Activated T-helper 1 cell treated with anti-CD3 and anti-CD28 coated beads, Interleukin-12 subunit alpha, Interleukin-12 subunit beta, Interleukin-2, Interleukin-4 antibody, amounts not matched to agents 30 ng/mL and 10 ng/mL and 1 ng/mL, durations not matched to agents 14 hours and 24 hours and 36 hours (primary cell): ENCODE measurements at regions of chr2 and their contacts with region 1.

Region 1: DNA sequence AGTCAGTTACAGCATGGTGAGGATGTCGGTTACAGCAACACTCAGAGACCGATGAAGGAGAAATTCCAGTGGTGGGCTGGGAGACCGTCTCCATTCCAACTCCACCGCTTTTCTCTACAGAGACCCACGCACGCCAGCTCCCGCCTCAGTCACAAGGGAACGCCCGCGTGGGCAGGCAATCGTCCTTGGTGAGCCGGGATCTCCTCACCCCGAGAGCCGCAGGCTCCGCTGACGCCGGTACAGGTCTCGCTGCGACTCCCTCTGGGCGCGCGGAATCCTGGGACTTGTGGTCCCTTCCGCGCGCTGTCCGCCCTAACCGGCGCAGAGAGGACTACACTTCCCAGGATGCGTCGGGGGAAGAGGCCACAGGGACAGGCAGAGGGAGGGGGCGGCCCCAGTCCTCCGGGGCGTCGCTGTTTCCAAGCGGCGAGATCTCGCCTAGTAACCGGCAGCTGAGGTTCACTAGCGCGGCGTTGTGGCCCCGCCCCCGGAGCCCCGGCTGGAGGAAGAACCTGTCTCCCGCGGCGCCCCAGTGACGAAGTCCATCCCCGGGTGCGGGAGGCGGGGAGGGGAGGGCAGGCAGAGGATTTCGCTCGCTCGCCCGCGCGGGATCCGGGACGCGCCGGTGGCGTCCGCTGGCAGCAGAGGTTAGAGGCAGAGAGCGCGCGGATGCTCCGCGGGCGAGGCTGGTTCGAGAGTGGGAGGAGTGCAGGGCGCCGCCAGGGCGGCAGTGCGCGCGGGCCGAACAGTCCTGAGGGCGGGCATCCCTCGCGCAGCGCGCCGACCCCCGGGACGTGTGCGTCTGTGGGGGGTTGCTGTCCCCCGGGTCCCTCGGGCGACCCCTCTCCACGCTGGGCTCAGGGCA is at the start of gene EML6:
- DNase-seq: peak; percentile 99
- H3K4me3 Mint-ChIP-seq: peak within 1 kb of the TSS; percentile 87
- H3K27ac Mint-ChIP-seq: peak within 1 kb of the TSS; percentile 49
- H3K4me1 Mint-ChIP-seq: peaks cover 14% of the 10 kb centered on the region
- H3K27me3 Mint-ChIP-seq: peaks cover 71% of the 10 kb centered on the region
- total RNA-seq, gene EML6: 0.37 and 0.44 TPM in 2 replicates

Region 2: GRCh38 chr2:53970724-53971602 is 752.4 kb before region 1 on chr2 and contains the start of gene PSME4:
- intact Hi-C with region 1: loop called (anchors 2 kb)
- DNase-seq: peak; percentile 91
- H3K4me3 Mint-ChIP-seq: peak within 1 kb of the TSS; percentile 99
- H3K27ac Mint-ChIP-seq: peak within 1 kb of the TSS; percentile 99
- H3K4me1 Mint-ChIP-seq: peaks cover 39% of the 10 kb centered on the region
- H3K27me3 Mint-ChIP-seq: no peaks in the 10 kb centered on the region
- total RNA-seq, gene PSME4: 59.3 and 59.7 TPM in 2 replicates

Region 3: DNA sequence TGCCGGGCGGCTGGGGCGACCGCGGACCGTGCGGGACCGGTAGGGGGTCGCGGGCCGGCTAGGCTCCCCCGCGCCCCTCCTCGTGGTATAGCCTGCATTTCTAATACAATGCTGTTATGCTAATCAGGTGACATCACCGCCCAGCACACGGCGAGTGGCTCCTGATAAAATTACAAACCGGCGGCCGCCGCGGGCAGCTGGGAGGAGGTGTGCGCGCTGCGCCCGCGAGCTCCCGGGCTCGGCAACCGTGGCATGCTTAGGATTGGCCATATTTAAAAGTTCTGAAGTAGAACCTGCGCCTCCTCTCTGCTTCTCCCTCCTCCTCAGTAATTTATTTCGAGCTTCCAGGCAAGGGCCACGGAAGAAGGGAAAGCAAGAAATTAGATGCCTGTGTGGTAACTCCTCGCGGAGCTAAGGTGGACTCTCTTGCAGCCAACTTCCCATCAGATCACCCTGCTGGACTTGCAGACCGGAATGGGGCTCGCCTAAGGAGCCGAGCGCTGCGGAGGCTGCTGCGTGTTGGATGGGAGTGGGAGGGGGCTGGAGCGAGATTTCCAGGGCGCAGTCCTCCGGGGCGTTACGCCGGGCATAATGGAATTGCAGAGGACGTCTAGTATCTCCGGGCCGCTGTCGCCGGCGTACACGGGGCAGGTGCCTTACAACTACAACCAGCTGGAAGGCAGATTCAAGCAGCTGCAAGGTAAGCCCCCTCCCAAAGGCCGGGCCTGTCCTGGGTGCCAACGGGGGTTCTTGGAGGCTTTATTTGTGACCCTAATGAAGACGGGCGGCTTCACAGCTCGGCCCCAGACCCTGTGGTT is 165.0 kb before region 1 on chr2:
- intact Hi-C with region 1: loop called (anchors 1 kb)
- DNase-seq: peak; percentile 64
- H3K4me3 Mint-ChIP-seq: peak overlapping the region; percentile 90
- H3K27ac Mint-ChIP-seq: peak overlapping the region; percentile 88
- H3K4me1 Mint-ChIP-seq: peaks cover 89% of the 10 kb centered on the region
- H3K27me3 Mint-ChIP-seq: peaks cover 3% of the 10 kb centered on the region

Region 4: GRCh38 chr2:54704688-54705605 is 18.4 kb before region 1 on chr2:
- intact Hi-C with region 1: loop called (anchors 2 kb)
- DNase-seq: no peak
- H3K4me3 Mint-ChIP-seq: no peak overlapping the region
- H3K27ac Mint-ChIP-seq: no peak overlapping the region
- H3K4me1 Mint-ChIP-seq: peaks cover 8% of the 10 kb centered on the region
- H3K27me3 Mint-ChIP-seq: peaks cover 53% of the 10 kb centered on the region

Region 5: DNA sequence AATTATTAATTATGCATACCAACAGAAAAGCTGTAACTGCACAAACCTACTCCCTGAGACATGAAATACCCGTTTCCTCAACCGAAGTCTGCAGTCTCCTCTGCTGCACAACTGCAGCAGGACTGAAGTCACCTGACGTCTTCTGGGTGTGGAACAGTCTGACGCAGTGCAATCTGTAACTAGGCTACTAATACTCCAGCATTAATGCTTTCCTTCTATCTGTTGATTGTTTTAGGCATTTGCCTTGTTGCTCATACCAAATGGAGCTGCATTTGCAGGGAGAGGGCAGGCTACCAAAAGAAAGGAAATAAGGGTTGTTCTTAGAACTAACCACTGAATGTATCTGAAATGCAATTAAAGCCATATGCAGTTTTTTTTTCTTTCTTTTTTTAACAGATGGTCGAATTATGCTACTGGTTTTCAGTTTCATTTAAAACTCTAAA is 286.8 kb after region 1 on chr2:
- intact Hi-C with region 1: loop called (anchors 10 kb)
- DNase-seq: peak; percentile 20
- H3K4me3 Mint-ChIP-seq: peak overlapping the region; percentile 83
- H3K27ac Mint-ChIP-seq: peak overlapping the region; percentile 35
- H3K4me1 Mint-ChIP-seq: peaks cover 42% of the 10 kb centered on the region
- H3K27me3 Mint-ChIP-seq: no peaks in the 10 kb centered on the region

Region 6: GRCh38 chr2:55232084-55232862 is 508.9 kb after region 1 on chr2 and contains the starts of genes CLHC1 and RPS27A:
- intact Hi-C with region 1: loop called (anchors 1 kb)
- DNase-seq: peak; percentile 89
- H3K4me3 Mint-ChIP-seq: peak within 1 kb of the TSS; percentile 100
- H3K27ac Mint-ChIP-seq: peak within 1 kb of the TSS; percentile 97
- H3K4me1 Mint-ChIP-seq: peaks cover 63% of the 10 kb centered on the region
- H3K27me3 Mint-ChIP-seq: no peaks in the 10 kb centered on the region
- total RNA-seq, gene CLHC1: 9.0 and 12.3 TPM in 2 replicates
- total RNA-seq, gene RPS27A: 949 and 953 TPM in 2 replicates

Region 7: DNA sequence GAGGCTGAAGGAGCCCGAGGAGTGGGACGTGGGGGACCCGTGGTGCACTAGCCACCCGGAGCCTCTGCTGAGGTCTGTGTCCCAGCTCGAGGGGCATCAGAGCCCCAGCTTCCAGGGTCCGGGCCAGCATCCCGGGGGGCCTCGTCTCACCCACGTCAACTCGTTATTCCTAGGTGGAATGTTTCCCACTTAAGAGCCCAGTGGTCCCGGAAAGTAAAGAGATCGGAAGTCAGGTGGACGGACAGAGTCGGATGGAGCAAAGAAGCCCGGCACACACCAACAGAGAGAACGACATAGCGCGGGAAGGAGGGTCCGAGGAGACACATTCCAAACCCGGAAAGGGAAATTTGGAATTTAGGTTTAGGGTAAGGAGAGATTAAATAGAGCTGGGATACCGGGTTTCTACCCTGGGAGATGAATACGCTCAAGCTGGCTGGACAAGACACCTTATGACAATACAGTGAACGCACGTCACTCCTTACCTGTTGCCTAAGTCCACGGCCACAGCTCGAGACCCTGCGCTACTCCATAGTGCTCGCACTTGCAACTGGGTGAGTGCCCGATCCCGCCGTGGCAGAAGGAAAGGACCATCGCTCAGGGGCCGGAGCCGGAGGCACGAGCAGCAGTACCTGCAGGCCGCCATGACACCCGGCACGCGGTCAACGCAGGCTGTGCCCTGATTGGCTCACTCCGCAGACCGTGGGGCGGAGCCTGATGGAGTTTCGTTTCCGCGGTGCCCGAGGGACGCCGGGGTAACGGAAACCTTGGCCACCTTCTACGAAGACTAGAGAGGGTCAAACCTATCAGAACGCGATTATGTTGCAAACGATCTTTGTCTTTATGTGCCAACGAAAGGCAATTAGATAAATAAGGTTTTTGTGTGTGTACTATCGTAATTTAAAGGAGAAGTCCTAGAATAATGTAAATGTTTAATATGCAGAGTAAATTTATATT is 970.1 kb after region 1 on chr2 and contains the start of gene PNPT1:
- intact Hi-C with region 1: loop called (anchors 2 kb)
- DNase-seq: peak; percentile 92
- H3K4me3 Mint-ChIP-seq: peak within 1 kb of the TSS; percentile 98
- H3K27ac Mint-ChIP-seq: peak within 1 kb of the TSS; percentile 89
- H3K4me1 Mint-ChIP-seq: peaks cover 39% of the 10 kb centered on the region
- H3K27me3 Mint-ChIP-seq: peaks cover 2% of the 10 kb centered on the region
- total RNA-seq, gene PNPT1: 65.1 and 71.1 TPM in 2 replicates